ENCODE measurements at regions of chr17 and their contacts with region 1.

Region 1: GRCh38 chr17:7279448-7279847 is 2.1 kb upstream of the SLC2A4 start:
- DNase-seq: no peak
- H3K4me3 ChIP-seq: no peak overlapping the region
- H3K27ac ChIP-seq: no peak overlapping the region
- H3K4me1 ChIP-seq: peaks cover 20 to 42% (median 32%) of the 10 kb centered on the region in 4 donors
- H3K27me3 ChIP-seq: peaks cover 0 to 31% (median 16%) of the 10 kb centered on the region in 3 donors
- CTCF ChIP-seq: no peak
- EP300 ChIP-seq: no peak
- POLR2A ChIP-seq: no peak

Region 2: DNA sequence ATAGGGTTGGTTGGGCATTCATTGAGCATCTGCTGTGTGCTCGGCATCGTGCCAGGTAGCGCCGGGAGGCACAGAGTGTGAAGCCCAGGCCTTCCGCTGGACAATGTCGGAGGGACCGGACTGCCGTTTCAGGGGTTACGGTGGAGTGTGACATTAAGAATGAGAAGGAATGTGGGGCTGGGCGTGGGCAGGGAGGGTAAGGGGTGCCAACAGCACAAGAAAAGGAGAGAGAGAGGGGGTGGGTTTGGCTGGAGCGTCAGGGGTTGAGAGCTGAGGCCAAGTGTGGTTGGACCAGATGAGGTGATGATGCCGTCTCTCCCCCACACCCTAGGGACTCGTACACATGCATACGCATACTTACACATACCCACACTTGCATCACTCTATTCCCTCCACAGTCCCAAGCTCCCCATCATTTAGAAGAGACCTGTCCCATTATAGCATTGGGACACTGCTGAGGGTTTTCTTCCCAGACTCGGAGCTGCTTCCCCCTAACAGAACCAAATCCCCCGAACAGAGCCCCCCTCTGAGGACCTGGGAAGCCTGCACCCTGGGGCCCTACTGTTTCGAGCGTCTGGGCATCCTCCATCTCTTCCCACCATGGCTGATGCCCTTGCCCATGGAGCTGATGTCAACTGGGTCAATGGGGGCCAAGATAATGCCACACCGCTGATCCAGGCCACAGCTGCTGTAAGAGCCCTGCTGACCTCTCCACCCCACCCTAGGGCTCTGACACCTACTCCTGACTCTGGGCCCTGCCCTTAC is 69.2 kb after region 1 on chr17:
- intact Hi-C with region 1: loop called (anchors 10 kb)
- DNase-seq: peak in 1 of 2 donors; percentile 38
- H3K4me3 ChIP-seq: no peak overlapping the region
- H3K27ac ChIP-seq: peak overlapping the region in 1 of 5 donors; percentile 99
- H3K4me1 ChIP-seq: peaks cover 29 to 53% (median 44%) of the 10 kb centered on the region in 4 donors
- H3K27me3 ChIP-seq: peaks cover 0 to 2% (median 0%) of the 10 kb centered on the region in 3 donors
- CTCF ChIP-seq: no peak
- EP300 ChIP-seq: no peak
- POLR2A ChIP-seq: no peak

Measured in stomach (tissue), 19 donors.